ENCODE measurements at regions of chr14 and their contacts with region 1.

Region 1: GRCh38 chr14:101707068-101707842 is 54.3 kb upstream of the PPP2R5C start:
- DNase-seq: peak; percentile 81
- ATAC-seq: peak; percentile 66
- H3K4me3 Mint-ChIP-seq: peak overlapping the region; percentile 3
- H3K27ac Mint-ChIP-seq: peak overlapping the region; percentile 73
- H3K4me1 Mint-ChIP-seq: peaks cover 33% of the 10 kb centered on the region
- H3K27me3 Mint-ChIP-seq: peaks cover 19% of the 10 kb centered on the region

Region 2: GRCh38 chr14:101635749-101636560 is 71.3 kb before region 1 on chr14:
- CTCF ChIA-PET with region 1: no interaction called
- POLR2A ChIA-PET with region 1: no interaction called
- DNase-seq: no peak
- ATAC-seq: no peak
- H3K4me3 Mint-ChIP-seq: no peak overlapping the region
- H3K27ac Mint-ChIP-seq: no peak overlapping the region
- H3K4me1 Mint-ChIP-seq: no peaks in the 10 kb centered on the region
- H3K27me3 Mint-ChIP-seq: peaks cover 26% of the 10 kb centered on the region

Region 3: DNA sequence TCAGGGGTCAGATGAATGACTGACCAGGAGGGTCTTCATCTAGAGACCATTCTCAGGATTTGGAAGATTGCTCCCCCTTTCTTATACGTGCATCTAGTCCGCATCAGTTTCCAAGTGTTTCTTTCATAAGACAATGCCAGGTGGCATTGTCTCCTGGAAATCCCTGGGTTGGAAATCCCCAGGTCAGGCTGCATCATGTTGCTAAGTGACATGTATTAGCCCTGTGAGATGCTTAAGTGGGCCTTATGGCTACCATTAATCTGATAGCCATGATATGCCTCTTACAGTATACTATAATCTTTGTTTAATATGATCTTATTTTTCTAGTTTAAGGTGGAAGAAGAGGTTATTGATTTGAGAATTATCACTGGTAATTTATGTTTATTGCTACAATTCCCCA is 53.2 kb before region 1 on chr14:
- CTCF ChIA-PET with region 1: no interaction called
- POLR2A ChIA-PET with region 1: no interaction called
- DNase-seq: no peak
- ATAC-seq: no peak
- H3K4me3 Mint-ChIP-seq: no peak overlapping the region
- H3K27ac Mint-ChIP-seq: no peak overlapping the region
- H3K4me1 Mint-ChIP-seq: peaks cover 2% of the 10 kb centered on the region
- H3K27me3 Mint-ChIP-seq: peaks cover 60% of the 10 kb centered on the region

Region 4: DNA sequence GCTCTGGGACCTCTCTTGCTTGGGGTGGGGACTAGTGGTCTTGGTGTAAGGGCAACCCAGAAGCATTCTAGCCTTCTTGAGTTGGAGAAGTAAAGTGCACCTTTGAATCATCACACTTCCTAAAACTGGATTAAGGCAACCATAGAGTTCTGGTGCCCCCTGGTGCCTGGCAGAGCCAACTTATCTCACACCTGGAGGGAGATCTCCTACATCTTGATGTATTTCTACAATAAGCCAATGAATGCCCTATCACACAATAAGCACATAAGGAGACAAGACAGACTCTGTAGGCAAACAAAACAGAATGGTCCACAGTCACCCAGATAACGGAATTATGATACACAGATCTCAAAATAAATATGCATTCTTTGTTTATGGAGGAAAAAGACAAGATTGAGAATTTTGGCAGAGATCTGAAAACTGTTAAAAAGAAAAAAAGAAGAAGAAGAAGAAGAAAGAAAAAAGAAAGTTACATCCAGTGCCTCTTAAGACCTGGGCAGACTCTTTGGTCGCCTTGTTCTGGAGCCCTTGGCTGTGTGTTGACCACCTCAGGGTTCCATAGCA is 41.7 kb before region 1 on chr14:
- CTCF ChIA-PET with region 1: no interaction called
- POLR2A ChIA-PET with region 1: no interaction called
- DNase-seq: peak; percentile 50
- ATAC-seq: peak; percentile 44
- H3K4me3 Mint-ChIP-seq: no peak overlapping the region
- H3K27ac Mint-ChIP-seq: no peak overlapping the region
- H3K4me1 Mint-ChIP-seq: no peaks in the 10 kb centered on the region
- H3K27me3 Mint-ChIP-seq: peaks cover 41% of the 10 kb centered on the region

Region 5: DNA sequence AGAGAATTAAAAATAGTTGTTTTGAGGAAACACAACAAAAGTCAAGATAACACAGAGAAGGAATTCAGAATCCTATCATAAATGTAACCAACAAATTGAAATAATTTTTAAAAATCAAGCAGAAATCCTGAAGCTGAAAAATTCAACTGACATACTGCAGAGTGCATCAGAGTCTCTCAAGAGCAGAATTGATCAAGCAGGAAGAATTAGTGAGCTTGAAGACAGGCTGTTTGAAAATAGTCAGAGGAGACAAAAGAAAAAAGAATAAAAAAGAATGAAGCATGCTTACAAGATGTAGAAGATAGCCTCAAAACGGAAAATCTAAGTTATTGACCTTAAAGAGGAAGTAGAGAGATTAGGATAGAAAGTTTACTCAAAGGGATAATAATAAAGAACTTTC is 11.6 kb before region 1 on chr14:
- CTCF ChIA-PET with region 1: interaction called, 12 read pairs
- POLR2A ChIA-PET with region 1: no interaction called
- DNase-seq: no peak
- ATAC-seq: no peak
- H3K4me3 Mint-ChIP-seq: no peak overlapping the region
- H3K27ac Mint-ChIP-seq: no peak overlapping the region
- H3K4me1 Mint-ChIP-seq: no peaks in the 10 kb centered on the region
- H3K27me3 Mint-ChIP-seq: peaks cover 42% of the 10 kb centered on the region

Region 6: GRCh38 chr14:101731187-101732080 is 24.2 kb after region 1 on chr14:
- CTCF ChIA-PET with region 1: interaction called, 25 read pairs
- POLR2A ChIA-PET with region 1: interaction called, 7 read pairs
- DNase-seq: peak; percentile 83
- ATAC-seq: peak; percentile 92
- H3K4me3 Mint-ChIP-seq: peak overlapping the region; percentile 62
- H3K27ac Mint-ChIP-seq: peak overlapping the region; percentile 95
- H3K4me1 Mint-ChIP-seq: peaks cover 32% of the 10 kb centered on the region
- H3K27me3 Mint-ChIP-seq: no peaks in the 10 kb centered on the region

Region 7: DNA sequence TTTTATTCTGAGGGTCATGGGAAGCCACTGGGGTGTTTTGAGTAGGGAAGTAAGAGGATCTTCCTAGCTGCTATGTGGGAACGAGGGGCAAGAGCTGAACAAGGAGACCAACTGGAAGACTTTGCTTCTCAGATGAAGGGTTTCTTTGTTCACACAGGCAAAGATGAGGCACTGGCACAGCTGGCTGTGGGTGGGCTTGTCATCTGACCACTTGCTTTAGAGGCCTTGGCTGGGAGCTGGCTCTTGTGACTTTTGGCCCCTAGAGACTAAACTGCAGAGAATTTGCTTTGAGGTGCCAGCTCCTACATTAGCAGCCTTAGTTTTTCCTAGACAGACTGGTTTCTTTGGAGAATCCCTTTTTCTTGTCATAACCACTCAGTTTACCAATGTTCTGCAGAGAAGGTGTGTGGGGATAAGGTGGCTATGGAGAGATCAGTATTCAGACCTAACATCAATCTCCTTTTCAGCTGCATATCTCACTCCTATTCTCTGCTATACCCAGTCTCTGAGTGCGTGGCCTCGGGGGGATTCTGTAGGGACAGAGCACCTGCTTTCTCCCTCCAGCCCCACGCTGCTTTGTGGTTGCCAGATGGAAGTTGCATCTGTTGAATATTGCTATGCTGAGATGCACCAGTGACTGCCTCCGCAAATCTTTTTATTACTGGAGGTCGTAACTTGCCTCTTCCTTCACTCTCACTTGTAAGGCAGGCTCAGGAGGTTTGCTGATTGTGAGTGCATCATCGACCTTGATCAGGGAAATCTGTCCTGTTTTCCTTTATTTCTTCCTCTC is 66.9 kb after region 1 on chr14:
- CTCF ChIA-PET with region 1: interaction called, 55 read pairs
- POLR2A ChIA-PET with region 1: interaction called, 3 read pairs
- DNase-seq: no peak
- ATAC-seq: no peak
- H3K4me3 Mint-ChIP-seq: no peak overlapping the region
- H3K27ac Mint-ChIP-seq: no peak overlapping the region
- H3K4me1 Mint-ChIP-seq: peaks cover 9% of the 10 kb centered on the region
- H3K27me3 Mint-ChIP-seq: peaks cover 3% of the 10 kb centered on the region

Region 8: DNA sequence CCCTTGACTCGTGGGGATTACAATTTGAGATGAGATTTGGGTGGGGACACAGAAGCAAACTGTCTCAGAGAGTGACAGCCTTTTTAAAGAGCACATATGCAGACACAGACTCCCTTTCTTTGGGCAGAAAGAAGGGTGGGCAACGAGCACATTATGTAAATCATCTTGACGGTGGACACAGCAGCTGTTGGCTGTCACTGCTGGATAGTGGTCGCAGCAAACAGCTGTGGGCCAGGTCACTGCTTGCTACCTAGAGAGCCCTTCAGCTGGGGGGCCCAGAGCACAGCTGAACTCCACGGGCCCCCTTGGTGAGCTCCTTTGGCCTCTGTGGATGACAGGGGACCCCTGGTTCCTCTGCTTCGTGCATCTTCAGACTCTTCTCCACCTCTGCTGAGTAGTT is 77.4 kb after region 1 on chr14:
- CTCF ChIA-PET with region 1: no interaction called
- POLR2A ChIA-PET with region 1: no interaction called
- DNase-seq: no peak
- ATAC-seq: no peak
- H3K4me3 Mint-ChIP-seq: no peak overlapping the region
- H3K27ac Mint-ChIP-seq: no peak overlapping the region
- H3K4me1 Mint-ChIP-seq: no peaks in the 10 kb centered on the region
- H3K27me3 Mint-ChIP-seq: peaks cover 13% of the 10 kb centered on the region

Region 9: DNA sequence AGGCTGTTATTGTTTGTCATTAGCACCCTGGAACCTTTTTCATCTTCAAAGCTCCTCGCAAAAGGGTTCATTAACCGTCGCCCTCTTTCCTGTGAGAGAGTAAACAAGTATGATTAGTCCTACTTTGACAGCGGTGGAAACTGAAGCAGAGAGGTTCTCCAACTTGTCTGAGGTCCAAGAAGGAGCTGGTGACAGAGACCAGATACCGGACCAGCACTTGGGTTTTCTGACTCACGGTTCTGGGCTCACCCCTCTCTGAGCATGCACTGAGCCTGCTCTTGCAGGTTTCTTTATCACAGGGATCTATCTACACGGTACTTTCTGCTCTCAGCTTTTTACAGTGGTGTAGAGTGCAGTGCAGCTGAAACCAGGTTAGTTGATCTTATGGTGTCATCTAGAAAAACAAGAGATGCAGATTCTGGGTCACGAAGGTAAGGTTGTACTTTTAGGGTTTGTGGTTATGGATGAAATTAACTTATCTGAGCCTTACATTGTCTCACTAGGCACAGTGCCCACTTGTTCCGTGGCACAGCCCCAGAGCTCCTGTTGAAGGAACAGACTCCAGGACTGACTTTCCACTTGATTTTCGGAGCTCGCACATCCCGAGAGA is 116.4 kb after region 1 on chr14:
- CTCF ChIA-PET with region 1: interaction called, 14 read pairs
- POLR2A ChIA-PET with region 1: interaction called, 6 read pairs
- DNase-seq: peak; percentile 72
- ATAC-seq: peak; percentile 62
- H3K4me3 Mint-ChIP-seq: peak overlapping the region; percentile 69
- H3K27ac Mint-ChIP-seq: peak overlapping the region; percentile 96
- H3K4me1 Mint-ChIP-seq: peaks cover 84% of the 10 kb centered on the region
- H3K27me3 Mint-ChIP-seq: no peaks in the 10 kb centered on the region

Region 10: GRCh38 chr14:101947906-101948665 is 240.8 kb after region 1 on chr14:
- CTCF ChIA-PET with region 1: no interaction called
- POLR2A ChIA-PET with region 1: interaction called, 17 read pairs
- DNase-seq: peak; percentile 100
- ATAC-seq: peak; percentile 98
- H3K4me3 Mint-ChIP-seq: peak overlapping the region; percentile 97
- H3K27ac Mint-ChIP-seq: peak overlapping the region; percentile 97
- H3K4me1 Mint-ChIP-seq: peaks cover 18% of the 10 kb centered on the region
- H3K27me3 Mint-ChIP-seq: peaks cover 19% of the 10 kb centered on the region